CD4-positive, alpha-beta T cell (primary cell): ENCODE measurements at regions of chr3 and their contacts with region 1.

Region 1: DNA sequence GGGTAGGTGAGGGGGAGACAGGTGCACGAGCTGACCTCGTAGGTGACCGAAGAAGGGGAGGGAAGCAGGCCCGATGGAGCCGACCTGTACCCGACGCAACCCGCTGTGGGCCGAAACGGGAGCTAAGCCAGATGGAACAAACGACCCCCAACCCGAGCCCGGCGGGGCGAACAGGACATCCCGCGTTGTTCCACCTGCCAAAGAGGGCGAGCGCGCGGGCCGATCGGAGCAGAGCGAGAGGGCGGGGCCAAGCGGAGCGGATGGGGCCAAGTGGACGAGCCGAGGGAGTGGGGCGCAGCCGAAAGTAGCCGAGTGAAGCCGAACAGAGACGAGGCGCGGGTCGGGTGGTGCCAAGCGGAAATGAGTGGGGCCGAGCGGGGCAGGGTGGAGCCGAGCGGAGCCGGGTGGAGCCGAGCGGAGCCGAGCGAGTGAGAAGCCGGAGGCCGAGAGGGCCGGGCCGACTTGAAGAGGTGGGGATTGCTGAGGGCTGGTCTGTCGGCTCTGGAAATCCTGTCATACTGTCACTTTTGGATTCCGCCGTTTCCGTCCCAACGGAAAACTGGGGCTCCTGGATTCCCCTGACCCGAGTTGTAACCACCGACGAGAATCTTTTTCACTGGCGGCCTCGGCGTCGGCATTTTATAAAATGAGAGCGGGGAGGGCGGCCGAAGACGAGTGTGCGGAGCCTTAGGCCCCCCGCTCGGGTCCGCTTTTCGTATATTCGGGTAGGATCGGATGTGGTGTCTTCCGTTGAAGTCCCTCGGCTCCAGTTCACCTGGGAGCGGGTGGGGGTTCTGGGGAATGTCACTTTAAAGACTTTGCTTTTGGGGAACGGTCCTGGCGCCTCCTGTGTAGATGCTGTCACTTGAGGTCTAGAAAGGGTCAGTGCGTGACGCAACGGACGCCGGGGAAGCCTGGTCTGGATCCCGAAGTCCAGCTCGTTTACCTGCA is 15.6 kb upstream of the WNT7A start:
- DNase-seq: peak; percentile 90 to 97 (median 94)
- ATAC-seq: peak; percentile 95
- H3K4me3 ChIP-seq: peak overlapping the region; percentile 72
- H3K4me3 Mint-ChIP-seq: peak overlapping the region; percentile 83
- H3K27ac ChIP-seq: peak overlapping the region; percentile 58 to 65
- H3K27ac Mint-ChIP-seq: peak overlapping the region; percentile 37
- H3K4me1 ChIP-seq: peaks cover 48% of the 10 kb centered on the region
- H3K4me1 Mint-ChIP-seq: peaks cover 43% of the 10 kb centered on the region
- H3K27me3 ChIP-seq: no peaks in the 10 kb centered on the region
- H3K27me3 Mint-ChIP-seq: no peaks in the 10 kb centered on the region
- CTCF ChIP-seq: no peak

Region 2: DNA sequence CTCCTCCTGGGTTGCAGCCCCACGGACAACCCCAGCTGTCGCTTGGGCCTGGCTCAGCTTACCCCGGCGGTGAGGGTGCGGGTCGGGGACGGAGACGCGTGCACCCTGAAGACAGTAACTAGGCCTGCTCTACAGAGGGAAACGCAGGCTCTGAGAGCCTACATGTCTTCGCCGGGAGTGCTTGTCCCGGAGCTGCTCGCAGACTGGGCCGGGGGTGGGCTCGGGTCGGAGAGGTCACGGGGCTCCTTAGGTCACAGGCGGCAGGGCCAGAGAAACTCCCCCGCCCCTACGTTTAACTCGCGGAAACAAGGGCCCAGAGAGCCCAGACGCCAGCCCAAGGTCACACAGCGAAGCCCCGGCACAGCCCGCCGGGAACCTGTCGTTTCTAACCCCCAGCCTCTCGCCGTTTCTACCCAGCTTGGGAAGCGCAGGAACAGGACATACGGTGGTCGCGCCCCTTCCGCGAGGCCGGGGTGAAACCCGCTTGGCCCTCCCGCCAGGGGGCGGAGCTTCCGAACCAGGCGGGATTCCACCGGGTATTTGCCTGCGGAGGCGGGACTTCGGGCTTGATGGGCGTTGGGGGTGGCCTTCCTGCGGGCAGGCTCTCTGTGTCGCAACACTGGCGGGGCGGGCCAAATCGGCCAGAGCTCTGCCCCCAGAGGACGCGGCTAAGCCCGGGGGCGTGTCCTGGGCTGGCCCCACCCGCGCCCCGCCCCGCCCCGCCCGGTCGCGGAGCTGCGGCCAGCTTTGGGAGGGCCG is 415.7 kb before region 1 on chr3 and contains the start of gene HDAC11:
- CTCF ChIA-PET with region 1: no interaction called
- POLR2A ChIA-PET with region 1: interaction called, 26 read pairs
- intact Hi-C with region 1: no loop called
- DNase-seq: peak; percentile 92 to 99 (median 97)
- ATAC-seq: peak; percentile 92
- H3K4me3 ChIP-seq: peak within 1 kb of the TSS; percentile 95
- H3K4me3 Mint-ChIP-seq: peak within 1 kb of the TSS; percentile 97
- H3K27ac ChIP-seq: peak within 1 kb of the TSS; percentile 79 to 80
- H3K27ac Mint-ChIP-seq: peak within 1 kb of the TSS; percentile 96
- H3K4me1 ChIP-seq: peaks cover 36% of the 10 kb centered on the region
- H3K4me1 Mint-ChIP-seq: peaks cover 9% of the 10 kb centered on the region
- H3K27me3 ChIP-seq: no peaks in the 10 kb centered on the region
- H3K27me3 Mint-ChIP-seq: no peaks in the 10 kb centered on the region
- CTCF ChIP-seq: no peak
- total RNA-seq, gene HDAC11: 4.5 to 4.6 TPM

Region 3: GRCh38 chr3:13884851-13885703 is 10.4 kb before region 1 on chr3:
- CTCF ChIA-PET with region 1: interaction called, 26 read pairs
- POLR2A ChIA-PET with region 1: interaction called, 34 read pairs
- intact Hi-C with region 1: no loop called
- DNase-seq: peak; percentile 61 to 88 (median 72)
- ATAC-seq: peak; percentile 79
- H3K4me3 ChIP-seq: no peak overlapping the region
- H3K4me3 Mint-ChIP-seq: peak overlapping the region; percentile 78
- H3K27ac ChIP-seq: no peak overlapping the region
- H3K27ac Mint-ChIP-seq: peak overlapping the region; percentile 3
- H3K4me1 ChIP-seq: peaks cover 27% of the 10 kb centered on the region
- H3K4me1 Mint-ChIP-seq: peaks cover 22% of the 10 kb centered on the region
- H3K27me3 ChIP-seq: peaks cover 4 to 13% of the 10 kb centered on the region in 2 experiments
- H3K27me3 Mint-ChIP-seq: peaks cover 15% of the 10 kb centered on the region
- CTCF ChIP-seq: peak; percentile 95

Region 4: GRCh38 chr3:14016885-14017475 is 121.5 kb after region 1 on chr3:
- CTCF ChIA-PET with region 1: no interaction called
- POLR2A ChIA-PET with region 1: no interaction called
- intact Hi-C with region 1: no loop called
- DNase-seq: no peak
- ATAC-seq: no peak
- H3K4me3 ChIP-seq: no peak overlapping the region
- H3K4me3 Mint-ChIP-seq: no peak overlapping the region
- H3K27ac ChIP-seq: no peak overlapping the region
- H3K27ac Mint-ChIP-seq: no peak overlapping the region
- H3K4me1 ChIP-seq: no peaks in the 10 kb centered on the region
- H3K4me1 Mint-ChIP-seq: no peaks in the 10 kb centered on the region
- H3K27me3 ChIP-seq: peaks cover 0 to 5% of the 10 kb centered on the region in 2 experiments
- H3K27me3 Mint-ChIP-seq: peaks cover 59% of the 10 kb centered on the region
- CTCF ChIP-seq: no peak

Region 5: GRCh38 chr3:14178247-14179113 is 283.1 kb after region 1 on chr3 and contains the starts of genes LSM3 and XPC:
- CTCF ChIA-PET with region 1: interaction called, 6 read pairs
- POLR2A ChIA-PET with region 1: interaction called, 29 read pairs
- intact Hi-C with region 1: loop called (anchors 5 to 10 kb)
- DNase-seq: peak; percentile 96 to 99 (median 98)
- ATAC-seq: peak; percentile 88
- H3K4me3 ChIP-seq: peak within 1 kb of the TSS; percentile 79
- H3K4me3 Mint-ChIP-seq: peak within 1 kb of the TSS; percentile 98
- H3K27ac ChIP-seq: peak within 1 kb of the TSS; percentile 94 to 97
- H3K27ac Mint-ChIP-seq: peak within 1 kb of the TSS; percentile 93
- H3K4me1 ChIP-seq: peaks cover 43% of the 10 kb centered on the region
- H3K4me1 Mint-ChIP-seq: peaks cover 76% of the 10 kb centered on the region
- H3K27me3 ChIP-seq: no peaks in the 10 kb centered on the region
- H3K27me3 Mint-ChIP-seq: no peaks in the 10 kb centered on the region
- CTCF ChIP-seq: no peak
- total RNA-seq, gene LSM3: 6.5 to 6.9 TPM
- total RNA-seq, gene XPC: 59.2 to 65.1 TPM

Region 6: GRCh38 chr3:14402304-14402811 is 506.9 kb after region 1 on chr3 and contains the start of gene SLC6A6:
- CTCF ChIA-PET with region 1: interaction called, 6 read pairs
- POLR2A ChIA-PET with region 1: interaction called, 12 read pairs
- intact Hi-C with region 1: loop called (anchors 2 to 5 kb)
- DNase-seq: peak; percentile 88 to 99 (median 95)
- ATAC-seq: peak; percentile 81
- H3K4me3 ChIP-seq: peak within 1 kb of the TSS; percentile 67
- H3K4me3 Mint-ChIP-seq: peak within 1 kb of the TSS; percentile 96
- H3K27ac ChIP-seq: peak within 1 kb of the TSS; percentile 62 to 82
- H3K27ac Mint-ChIP-seq: peak within 1 kb of the TSS; percentile 90
- H3K4me1 ChIP-seq: peaks cover 52% of the 10 kb centered on the region
- H3K4me1 Mint-ChIP-seq: peaks cover 55% of the 10 kb centered on the region
- H3K27me3 ChIP-seq: no peaks in the 10 kb centered on the region
- H3K27me3 Mint-ChIP-seq: no peaks in the 10 kb centered on the region
- CTCF ChIP-seq: peak; percentile 59
- total RNA-seq, gene SLC6A6: 27.8 to 31.2 TPM

Region 7: DNA sequence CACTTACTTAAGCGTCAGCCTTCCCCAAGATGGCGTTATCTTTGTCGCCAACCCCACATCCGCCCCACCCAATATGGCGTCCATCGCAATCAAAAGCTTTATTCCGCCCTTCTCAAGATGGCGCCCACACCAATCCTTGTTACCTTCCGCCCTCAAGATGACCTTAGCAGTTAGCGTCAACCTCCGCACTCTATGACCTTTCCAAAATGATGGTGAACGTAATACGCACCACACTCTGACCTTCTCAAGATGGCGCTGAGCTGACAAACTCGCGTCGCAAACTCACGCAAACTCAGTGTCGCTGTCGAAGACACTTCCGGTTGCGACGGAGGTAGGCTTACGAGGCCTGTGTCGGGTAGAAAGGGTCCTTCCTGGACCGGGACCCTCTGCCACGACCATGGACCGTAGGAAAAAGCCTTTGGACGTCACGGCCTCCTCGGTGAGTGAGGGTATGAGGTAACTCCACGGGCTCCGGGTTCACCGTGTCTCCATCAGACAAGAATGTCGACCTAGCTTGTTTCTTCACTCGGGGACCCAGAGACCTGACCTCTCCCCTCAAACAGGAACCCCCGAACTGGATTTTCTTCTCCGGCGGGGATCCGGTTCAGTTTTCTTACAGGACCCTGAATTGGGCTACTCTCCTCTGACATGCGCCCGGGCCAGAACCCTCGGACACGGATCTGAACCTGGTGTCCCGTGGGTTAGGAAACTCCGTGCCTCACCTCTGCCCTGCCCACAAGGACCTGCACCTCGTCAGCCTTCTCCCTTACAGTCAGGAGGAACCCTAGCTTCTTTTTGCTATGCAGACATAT is 756.2 kb after region 1 on chr3 and contains the start of gene CCDC174:
- CTCF ChIA-PET with region 1: interaction called, 5 read pairs
- POLR2A ChIA-PET with region 1: interaction called, 8 read pairs
- intact Hi-C with region 1: loop called in 1 of 2 experiments (anchors 5 kb)
- DNase-seq: peak; percentile 90 to 100 (median 94)
- ATAC-seq: peak; percentile 97
- H3K4me3 ChIP-seq: peak within 1 kb of the TSS; percentile 75
- H3K4me3 Mint-ChIP-seq: peak within 1 kb of the TSS; percentile 87
- H3K27ac ChIP-seq: peak within 1 kb of the TSS; percentile 76 to 97
- H3K27ac Mint-ChIP-seq: peak within 1 kb of the TSS; percentile 85
- H3K4me1 ChIP-seq: peaks cover 29% of the 10 kb centered on the region
- H3K4me1 Mint-ChIP-seq: peaks cover 61% of the 10 kb centered on the region
- H3K27me3 ChIP-seq: no peaks in the 10 kb centered on the region
- H3K27me3 Mint-ChIP-seq: no peaks in the 10 kb centered on the region
- CTCF ChIP-seq: no peak
- total RNA-seq, gene CCDC174: 32.9 to 37.5 TPM